Sigmoid colon (tissue), 7 donors: ENCODE measurements at regions of chr14 and their contacts with region 1.

Region 1: GRCh38 chr14:75258615-75259466 is 19.8 kb upstream of the FOS start:
- DNase-seq: peak; percentile 99
- H3K4me3 ChIP-seq: peak overlapping the region; percentile 30 to 51 (median 48)
- H3K27ac ChIP-seq: peak overlapping the region; percentile 87 to 98 (median 92)
- H3K4me1 ChIP-seq: peaks cover 0 to 23% (median 14%) of the 10 kb centered on the region in 4 donors
- H3K27me3 ChIP-seq: no peaks in the 10 kb centered on the region
- CTCF ChIP-seq: no peak
- EP300 ChIP-seq: peak; percentile 78 to 99 (median 96)
- POLR2A ChIP-seq: peak; percentile 50 to 70

Region 2: DNA sequence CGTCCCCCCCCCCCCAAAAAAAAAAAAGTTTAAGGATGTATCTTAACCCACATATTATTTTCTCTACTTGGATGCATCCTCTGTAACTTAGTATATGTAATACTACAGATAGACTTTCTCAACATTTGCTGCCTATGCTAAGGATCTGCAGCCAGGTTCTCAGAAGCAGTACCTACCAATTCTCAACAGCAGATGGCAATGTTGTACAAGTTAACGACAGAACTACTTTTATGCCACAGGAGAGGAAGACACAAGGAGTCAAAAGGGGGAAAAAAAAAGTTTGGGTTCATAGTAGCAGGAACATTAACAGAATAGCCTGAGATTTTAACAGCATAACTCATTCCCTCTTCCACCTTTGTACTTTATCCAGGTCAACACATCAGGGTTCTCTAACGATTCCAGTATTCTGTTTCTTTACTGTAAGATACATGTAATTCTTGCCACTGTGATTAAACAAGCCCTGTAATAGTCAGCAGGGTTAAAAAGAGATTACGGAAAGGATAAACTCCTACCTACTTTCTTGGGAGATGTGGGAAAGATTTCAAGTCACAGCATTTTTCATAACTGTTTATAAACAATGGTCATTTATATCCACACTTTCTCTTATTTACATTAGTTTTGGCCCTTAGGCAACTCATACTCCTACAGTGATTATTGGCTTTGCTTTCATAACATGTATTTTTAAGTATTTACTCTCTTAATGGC is 126.3 kb before region 1 on chr14:
- intact Hi-C with region 1: loop called (anchors 5 kb)
- DNase-seq: no peak
- H3K4me3 ChIP-seq: no peak overlapping the region
- H3K27ac ChIP-seq: peak overlapping the region; percentile 9 to 57 (median 34)
- H3K4me1 ChIP-seq: peaks cover 0 to 16% (median 8%) of the 10 kb centered on the region in 4 donors
- H3K27me3 ChIP-seq: no peaks in the 10 kb centered on the region
- CTCF ChIP-seq: peak; percentile 69 to 87 (median 72)
- EP300 ChIP-seq: no peak
- POLR2A ChIP-seq: no peak

Region 3: GRCh38 chr14:75176142-75176820 is 82.6 kb before region 1 on chr14 and contains the start of gene TMED10:
- intact Hi-C with region 1: loop called (anchors 2 kb)
- DNase-seq: peak; percentile 96
- H3K4me3 ChIP-seq: peak within 1 kb of the TSS; percentile 84 to 98 (median 90)
- H3K27ac ChIP-seq: peak within 1 kb of the TSS; percentile 97 to 99 (median 98)
- H3K4me1 ChIP-seq: peaks cover 0 to 33% (median 21%) of the 10 kb centered on the region in 4 donors
- H3K27me3 ChIP-seq: no peaks in the 10 kb centered on the region
- CTCF ChIP-seq: no peak
- EP300 ChIP-seq: peak in 1 of 4 donors; percentile 32
- POLR2A ChIP-seq: peak; percentile 66 to 67
- total RNA-seq, gene TMED10: 107 to 175 (median 165) TPM

Region 4: GRCh38 chr14:75234173-75235115 is 24.4 kb before region 1 on chr14:
- intact Hi-C with region 1: loop called (anchors 2 kb)
- DNase-seq: peak; percentile 83
- H3K4me3 ChIP-seq: no peak overlapping the region
- H3K27ac ChIP-seq: peak overlapping the region in 3 of 4 donors; percentile 17 to 86 (median 38)
- H3K4me1 ChIP-seq: peaks cover 0 to 30% (median 25%) of the 10 kb centered on the region in 4 donors
- H3K27me3 ChIP-seq: no peaks in the 10 kb centered on the region
- CTCF ChIP-seq: no peak
- EP300 ChIP-seq: no peak
- POLR2A ChIP-seq: no peak

Region 5: GRCh38 chr14:75278422-75279161 is 19.8 kb after region 1 on chr14 and contains the start of gene FOS:
- intact Hi-C with region 1: loop called (anchors 1 kb)
- DNase-seq: peak; percentile 98
- H3K4me3 ChIP-seq: peak within 1 kb of the TSS; percentile 57 to 83 (median 68)
- H3K27ac ChIP-seq: peak within 1 kb of the TSS; percentile 99 to 100 (median 100)
- H3K4me1 ChIP-seq: peaks cover 0 to 50% (median 42%) of the 10 kb centered on the region in 4 donors
- H3K27me3 ChIP-seq: no peaks in the 10 kb centered on the region
- CTCF ChIP-seq: no peak
- EP300 ChIP-seq: peak in 3 of 4 donors; percentile 53 to 91 (median 82)
- POLR2A ChIP-seq: peak; percentile 99
- total RNA-seq, gene FOS: 172 to 1,048 (median 650) TPM

Region 6: GRCh38 chr14:75372260-75372659 is 113.4 kb after region 1 on chr14:
- intact Hi-C with region 1: no loop called
- DNase-seq: no peak
- H3K4me3 ChIP-seq: no peak overlapping the region
- H3K27ac ChIP-seq: no peak overlapping the region
- H3K4me1 ChIP-seq: no peaks in the 10 kb centered on the region
- H3K27me3 ChIP-seq: no peaks in the 10 kb centered on the region
- CTCF ChIP-seq: no peak
- EP300 ChIP-seq: no peak
- POLR2A ChIP-seq: no peak